Dorsolateral prefrontal cortex (tissue), 120 donors: ENCODE measurements at regions of chr4 and their contacts with region 1.

Region 1: DNA sequence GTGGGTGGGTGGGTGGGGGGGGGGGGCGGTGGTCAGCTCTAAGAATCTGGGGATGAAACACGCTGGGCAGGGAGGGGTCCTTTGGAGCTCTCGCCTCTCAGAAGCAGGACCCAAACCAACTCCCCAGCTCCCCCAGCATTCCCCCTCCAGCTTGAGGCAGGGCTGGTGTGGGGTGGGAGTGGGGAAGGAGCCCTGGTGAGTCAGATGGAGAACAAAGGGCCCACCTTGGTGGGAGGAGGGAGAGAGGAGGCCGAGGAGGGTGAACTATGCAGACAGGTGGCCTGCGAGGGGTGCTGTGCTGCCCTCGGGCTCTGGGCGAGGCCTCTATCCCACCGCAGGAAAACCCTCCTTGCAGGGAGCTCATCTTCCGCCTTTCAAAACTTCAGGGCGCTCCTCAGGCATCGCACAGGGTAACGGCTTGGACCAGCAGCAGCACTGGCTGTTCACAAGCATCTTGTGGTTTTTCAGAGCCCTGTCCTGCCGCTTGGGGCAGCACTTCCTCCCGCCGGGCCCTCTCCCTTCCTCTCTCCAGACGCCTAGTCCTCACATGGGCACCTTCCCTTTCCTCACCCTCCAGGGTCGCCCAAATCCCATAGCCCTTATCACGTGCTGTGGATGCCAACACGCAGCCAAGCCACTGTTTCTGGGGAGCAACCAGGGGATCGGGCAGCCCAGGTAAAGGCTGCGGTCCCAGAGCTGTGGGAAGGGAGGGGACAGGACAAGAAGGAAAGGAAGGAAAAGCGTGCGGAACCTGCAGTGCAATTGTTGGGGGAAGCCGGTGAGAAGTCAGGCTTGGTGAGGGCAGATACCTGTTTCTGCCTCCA is 34.0 kb upstream of the GRPEL1 start:
- DNase-seq: peak; percentile 69 to 88 (median 84)
- H3K4me3 ChIP-seq: peak overlapping the region; percentile 34 to 84 (median 68)
- H3K27ac ChIP-seq: peak overlapping the region in 47 of 59 donors; percentile 3 to 98 (median 92)
- H3K27me3 ChIP-seq: no peaks in the 10 kb centered on the region
- CTCF ChIP-seq: peak; percentile 46 to 91 (median 76)

Region 2: DNA sequence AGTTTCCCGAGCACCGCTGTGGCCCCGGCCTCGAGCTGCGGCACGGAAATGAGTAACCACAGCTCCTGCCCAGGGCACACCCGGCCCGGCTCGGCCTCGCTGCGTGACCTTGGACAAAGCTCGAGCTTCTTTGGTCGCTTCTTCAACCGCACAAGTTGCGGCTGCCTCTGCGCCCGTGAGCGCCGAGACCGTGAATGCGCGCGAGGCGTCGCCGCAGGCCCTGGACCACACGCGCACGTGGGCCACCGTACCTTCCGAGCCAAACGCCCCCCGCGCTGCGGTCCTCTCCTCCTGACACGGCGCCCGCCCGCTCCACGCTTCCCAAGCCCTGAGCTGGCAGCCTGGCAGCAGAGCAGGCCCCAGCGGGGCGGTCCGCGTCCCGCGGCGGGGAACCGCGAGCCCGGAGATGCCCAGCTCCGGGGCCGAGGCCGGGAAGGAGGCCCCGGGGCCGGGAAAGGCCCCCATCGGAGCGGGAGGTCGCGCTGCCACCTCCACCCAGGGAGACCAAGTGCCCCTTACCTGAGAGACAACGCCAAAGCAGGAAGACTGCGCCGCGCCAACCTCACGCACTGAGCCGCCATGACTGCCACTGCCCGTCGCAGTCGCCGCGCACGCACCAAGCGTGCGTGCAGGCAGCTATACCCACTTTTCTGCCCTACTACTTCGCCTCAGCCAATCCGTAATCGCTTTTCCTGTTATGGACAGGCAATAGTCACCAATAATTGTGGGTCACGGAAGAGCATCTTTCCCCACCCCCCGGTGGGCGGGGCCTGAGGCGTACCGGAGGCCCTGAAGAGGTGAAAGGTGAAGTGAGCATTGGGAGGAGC is 34.2 kb before region 1 on chr4 and contains the start of gene GRPEL1:
- intact Hi-C with region 1: no loop called
- DNase-seq: peak; percentile 98 to 100 (median 99)
- H3K4me3 ChIP-seq: peak within 1 kb of the TSS; percentile 64 to 100 (median 96)
- H3K27ac ChIP-seq: peak within 1 kb of the TSS; percentile 3 to 95 (median 87)
- H3K27me3 ChIP-seq: no peaks in the 10 kb centered on the region
- CTCF ChIP-seq: peak in 15 of 56 donors; percentile 4 to 42 (median 25)
- total RNA-seq, gene GRPEL1: 19.1 to 48.6 (median 35.8) TPM

Region 3: GRCh38 chr4:7144374-7145290 is 42.7 kb after region 1 on chr4:
- intact Hi-C with region 1: no loop called
- DNase-seq: no peak
- H3K4me3 ChIP-seq: no peak overlapping the region
- H3K27ac ChIP-seq: no peak overlapping the region
- H3K27me3 ChIP-seq: peaks cover 0 to 4% (median 0%) of the 10 kb centered on the region in 45 donors
- CTCF ChIP-seq: no peak

Region 4: DNA sequence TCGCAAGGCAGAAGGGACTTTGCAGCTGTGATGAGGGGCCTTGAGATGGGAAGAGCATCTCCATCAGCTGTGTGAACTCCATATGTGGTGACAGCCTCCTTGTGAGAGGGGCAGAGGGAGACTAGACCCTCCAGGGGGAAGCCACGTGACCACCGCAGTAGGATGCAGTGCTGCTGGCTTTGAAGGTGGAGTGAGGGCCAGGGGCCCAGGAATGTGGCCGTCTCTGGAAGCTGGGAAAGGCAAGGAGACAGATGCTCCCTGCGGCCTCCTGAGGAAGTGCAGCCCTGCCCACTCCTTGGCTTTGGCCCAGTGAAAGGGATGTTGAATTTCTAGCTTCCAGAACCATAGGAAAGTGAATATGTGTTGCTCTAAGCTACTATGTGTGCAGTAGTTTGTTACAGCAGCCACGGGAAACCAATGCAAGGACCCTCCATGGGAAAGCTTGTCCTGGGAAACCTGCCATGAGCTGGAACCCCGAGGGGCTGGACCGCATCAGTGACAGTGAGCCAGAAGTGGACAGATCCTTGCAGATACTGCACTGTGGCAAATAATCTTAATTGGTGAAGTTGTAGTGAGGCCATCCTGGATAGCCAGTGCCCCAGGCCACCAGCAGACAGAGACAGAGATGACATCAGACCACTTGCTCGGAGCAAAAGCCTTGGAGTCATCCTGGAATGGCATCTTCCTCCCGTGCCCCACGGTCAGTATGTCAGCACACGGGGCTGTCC is 55.0 kb after region 1 on chr4:
- intact Hi-C with region 1: loop called in 1 of 2 experiments (anchors 5 kb)
- DNase-seq: peak; percentile 17 to 66 (median 46)
- H3K4me3 ChIP-seq: no peak overlapping the region
- H3K27ac ChIP-seq: no peak overlapping the region
- H3K27me3 ChIP-seq: no peaks in the 10 kb centered on the region
- CTCF ChIP-seq: peak in 52 of 56 donors; percentile 15 to 66 (median 49)

Region 5: GRCh38 chr4:7186061-7186461 is 84.2 kb after region 1 on chr4:
- intact Hi-C with region 1: loop called in 1 of 2 experiments (anchors 5 kb)
- DNase-seq: peak in 4 of 10 donors; percentile 16 to 34 (median 27)
- H3K4me3 ChIP-seq: no peak overlapping the region
- H3K27ac ChIP-seq: no peak overlapping the region
- H3K27me3 ChIP-seq: peaks cover 0 to 17% (median 0%) of the 10 kb centered on the region in 45 donors
- CTCF ChIP-seq: peak in 30 of 56 donors; percentile 10 to 46 (median 24)

Region 6: GRCh38 chr4:7649741-7650531 is 548.0 kb after region 1 on chr4:
- intact Hi-C with region 1: loop called in 1 of 2 experiments (anchors 10 kb)
- DNase-seq: peak in 1 of 10 donors; percentile 43
- H3K4me3 ChIP-seq: no peak overlapping the region
- H3K27ac ChIP-seq: no peak overlapping the region
- H3K27me3 ChIP-seq: no peaks in the 10 kb centered on the region
- CTCF ChIP-seq: no peak